PC-3 (cell line): ENCODE measurements at regions of chr1 and their contacts with region 1.

Region 1: GRCh38 chr1:177181631-177182291 is 11.0 kb downstream of the BRINP2 start:
- DNase-seq: peak; percentile 78
- ATAC-seq: peak; percentile 93
- H3K4me3 ChIP-seq: peak overlapping the region; percentile 57
- H3K27ac ChIP-seq: no peak overlapping the region
- H3K4me1 ChIP-seq: peaks cover 11% of the 10 kb centered on the region
- H3K27me3 ChIP-seq: no peaks in the 10 kb centered on the region
- CTCF ChIP-seq: peak; percentile 79

Region 2: DNA sequence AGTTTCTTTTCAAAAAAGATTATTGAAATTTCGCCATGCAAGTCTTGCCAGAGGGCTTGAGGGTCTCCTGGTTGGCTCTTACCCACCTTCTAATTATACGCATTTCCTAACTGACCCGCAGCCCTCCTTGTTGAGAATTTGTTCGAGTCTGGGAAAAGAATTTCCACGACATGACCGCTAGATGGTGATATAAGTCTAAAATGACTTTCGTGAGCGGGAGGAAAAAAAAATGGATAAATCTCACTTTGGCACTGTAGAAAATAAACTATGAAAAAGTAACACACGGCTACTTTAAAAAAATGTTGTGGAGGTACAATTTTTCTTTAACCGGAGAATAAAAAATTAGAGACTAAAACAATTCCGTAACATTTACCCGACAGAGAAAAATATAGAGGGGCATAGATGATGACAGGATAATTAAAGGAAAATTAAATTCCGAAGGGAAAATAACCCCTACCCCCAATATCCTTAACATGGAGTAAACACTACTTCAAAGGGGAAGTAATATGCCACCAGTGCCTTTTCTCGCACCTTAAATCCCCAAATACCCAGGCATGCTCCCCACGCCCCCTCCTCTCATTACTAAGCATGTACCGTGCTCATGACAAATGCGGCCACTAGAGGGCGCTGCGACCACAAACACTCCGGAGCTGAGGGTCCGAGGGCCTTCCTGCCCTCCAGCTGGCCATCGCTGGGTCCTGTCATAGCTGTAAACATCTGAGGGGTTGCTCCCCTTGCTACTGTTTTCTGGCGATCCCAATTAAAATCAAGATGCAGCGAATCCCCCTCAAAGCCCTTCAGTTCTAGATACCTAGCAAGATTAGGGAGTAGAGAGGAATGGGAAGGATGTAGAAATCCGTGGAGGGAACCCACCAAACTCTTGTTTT is 284.2 kb before region 1 on chr1:
- CTCF ChIA-PET with region 1: interaction called, 23 read pairs
- POLR2A ChIA-PET with region 1: no interaction called
- intact Hi-C with region 1: loop called (anchors 1 kb)
- DNase-seq: peak; percentile 72
- ATAC-seq: peak; percentile 80
- H3K4me3 ChIP-seq: peak overlapping the region; percentile 57
- H3K27ac ChIP-seq: no peak overlapping the region
- H3K4me1 ChIP-seq: no peaks in the 10 kb centered on the region
- H3K27me3 ChIP-seq: peaks cover 32% of the 10 kb centered on the region; the same call in 1 of the 2 replicates
- CTCF ChIP-seq: peak; percentile 85

Region 3: DNA sequence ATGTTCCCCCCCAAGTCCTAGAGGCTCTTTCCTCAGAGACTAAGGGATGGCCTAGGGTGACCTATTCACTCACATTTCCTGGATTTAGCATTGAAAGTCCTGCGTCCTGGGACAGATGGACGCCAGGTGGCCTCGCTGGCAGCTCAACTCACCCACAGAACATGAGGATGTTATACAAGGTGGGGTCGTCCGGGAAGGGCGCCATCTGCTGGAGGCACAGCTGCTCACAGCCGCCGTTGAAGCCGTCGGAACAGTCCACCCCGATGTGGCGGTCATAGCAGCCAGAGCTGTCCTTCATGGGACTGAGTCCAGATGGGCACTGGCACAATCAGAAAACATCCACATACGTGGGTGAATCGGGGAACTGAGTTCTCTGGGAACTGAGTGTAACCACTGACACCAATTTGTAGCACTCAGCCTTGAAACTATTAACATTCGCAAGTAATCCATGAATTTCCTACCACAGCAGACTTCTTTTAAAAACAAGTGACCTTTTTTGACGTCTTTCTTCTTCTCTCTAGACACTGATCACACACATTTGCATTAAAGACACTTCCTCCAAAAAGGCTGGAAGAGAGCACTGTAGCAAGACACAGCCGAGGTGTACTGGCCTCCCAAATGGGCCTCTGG is 232.6 kb before region 1 on chr1:
- CTCF ChIA-PET with region 1: no interaction called
- POLR2A ChIA-PET with region 1: no interaction called
- intact Hi-C with region 1: loop called (anchors 2 kb)
- DNase-seq: peak; percentile 54
- ATAC-seq: peak; percentile 59
- H3K4me3 ChIP-seq: no peak overlapping the region
- H3K27ac ChIP-seq: no peak overlapping the region
- H3K4me1 ChIP-seq: no peaks in the 10 kb centered on the region
- H3K27me3 ChIP-seq: no peaks in the 10 kb centered on the region
- CTCF ChIP-seq: peak; percentile 78

Region 4: DNA sequence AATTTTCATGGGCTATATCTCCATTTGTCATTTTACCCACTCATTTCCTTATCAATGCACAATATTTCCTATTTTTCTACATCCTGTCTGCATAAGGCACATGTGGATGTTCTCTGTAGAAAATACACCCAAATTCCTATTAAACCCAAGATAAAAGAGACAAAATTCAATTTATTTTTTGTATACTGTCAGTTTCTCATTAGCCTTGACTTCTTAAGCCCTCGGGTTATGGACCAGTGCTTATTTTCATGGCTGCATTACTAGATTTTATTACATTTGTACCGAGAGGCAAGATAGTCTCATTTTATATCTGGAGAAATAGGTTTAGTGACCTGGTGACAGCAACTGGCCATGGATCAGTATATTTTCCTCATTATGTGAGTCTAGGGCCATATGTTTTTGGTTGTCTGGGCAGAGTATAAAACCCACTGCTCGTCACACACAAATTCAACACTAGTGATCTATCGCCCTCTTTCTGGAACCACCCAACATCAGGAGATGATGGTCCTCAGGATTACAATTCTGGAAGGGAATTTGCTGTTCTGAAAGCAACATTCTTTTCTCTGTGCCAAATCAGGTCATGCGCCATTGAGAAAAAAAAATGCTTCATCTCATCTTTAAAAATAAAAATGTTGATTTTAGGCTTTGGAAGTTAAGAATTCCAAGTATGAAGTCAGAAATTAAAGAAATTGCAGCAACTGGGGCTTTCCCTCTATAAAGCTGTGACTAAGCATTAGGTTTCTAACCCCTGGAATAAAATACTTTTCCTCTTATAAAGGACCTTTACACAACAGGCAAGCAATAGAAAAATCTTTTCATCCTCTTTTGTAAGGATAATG is 98.7 kb before region 1 on chr1:
- CTCF ChIA-PET with region 1: no interaction called
- POLR2A ChIA-PET with region 1: no interaction called
- intact Hi-C with region 1: loop called (anchors 5 kb)
- DNase-seq: peak; percentile 83
- ATAC-seq: peak; percentile 90
- H3K4me3 ChIP-seq: no peak overlapping the region
- H3K27ac ChIP-seq: peak overlapping the region; percentile 84
- H3K4me1 ChIP-seq: peaks cover 29% of the 10 kb centered on the region
- H3K27me3 ChIP-seq: no peaks in the 10 kb centered on the region
- CTCF ChIP-seq: no peak

Region 5: DNA sequence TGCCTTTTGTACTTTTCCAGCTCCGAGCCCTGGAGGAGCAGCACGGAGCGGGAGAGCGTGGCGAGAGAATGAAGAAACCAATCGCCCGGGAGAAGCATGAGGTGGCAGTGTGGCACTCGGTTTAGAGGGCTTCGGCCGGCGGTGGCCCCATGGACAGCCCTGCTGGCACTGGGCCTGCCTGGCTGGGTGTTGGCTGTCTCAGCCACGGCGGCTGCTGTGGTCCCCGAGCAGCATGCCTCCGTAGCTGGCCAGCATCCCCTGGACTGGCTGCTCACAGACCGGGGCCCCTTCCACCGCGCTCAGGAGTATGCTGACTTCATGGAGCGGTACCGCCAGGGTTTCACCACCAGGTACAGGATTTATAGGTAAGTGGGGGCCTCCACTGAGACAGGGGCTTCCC is 48.0 kb after region 1 on chr1:
- CTCF ChIA-PET with region 1: no interaction called
- POLR2A ChIA-PET with region 1: no interaction called
- intact Hi-C with region 1: loop called (anchors 5 kb)
- DNase-seq: no peak
- ATAC-seq: no peak
- H3K4me3 ChIP-seq: no peak overlapping the region
- H3K27ac ChIP-seq: no peak overlapping the region
- H3K4me1 ChIP-seq: peaks cover 10% of the 10 kb centered on the region
- H3K27me3 ChIP-seq: no peaks in the 10 kb centered on the region
- CTCF ChIP-seq: no peak

Region 6: GRCh38 chr1:177355595-177355994 is 173.8 kb after region 1 on chr1:
- CTCF ChIA-PET with region 1: no interaction called
- POLR2A ChIA-PET with region 1: no interaction called
- intact Hi-C with region 1: loop called (anchors 5 kb)
- DNase-seq: peak; percentile 60
- ATAC-seq: peak; percentile 81
- H3K4me3 ChIP-seq: no peak overlapping the region
- H3K27ac ChIP-seq: no peak overlapping the region
- H3K4me1 ChIP-seq: 0 out of 2 replicates have a peak, but pooled peaks cover 3% of the 10 kb centered on the region
- H3K27me3 ChIP-seq: no peaks in the 10 kb centered on the region
- CTCF ChIP-seq: peak; percentile 72

Region 7: DNA sequence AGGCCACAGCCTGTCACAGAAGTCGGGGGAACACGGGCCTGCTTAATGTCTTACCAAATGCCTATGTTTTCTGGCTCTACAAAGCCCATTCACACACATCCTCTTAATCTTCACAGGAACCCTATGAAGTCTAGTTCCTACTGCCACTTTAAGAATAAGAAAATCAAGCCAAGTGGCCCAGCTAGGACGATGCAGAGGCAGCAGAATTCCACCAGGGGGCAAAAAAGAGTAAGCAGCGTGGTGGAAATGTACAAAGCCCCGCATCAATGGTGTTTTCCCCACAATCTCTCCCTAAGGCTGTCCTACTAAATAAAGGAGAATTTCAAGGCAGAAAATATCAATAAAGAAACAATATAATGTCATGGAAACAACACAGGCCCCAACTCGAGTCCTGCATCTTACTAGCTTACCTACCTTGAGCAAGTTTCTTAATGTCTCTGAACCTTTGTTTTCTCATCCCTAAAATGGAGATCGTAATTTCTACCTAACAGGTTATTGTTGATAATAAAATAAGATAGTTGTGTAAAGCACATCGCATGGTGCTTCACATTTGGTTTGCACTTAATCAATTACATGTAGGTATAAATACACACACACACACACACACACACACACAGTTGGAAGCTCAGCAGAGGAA is 766.7 kb after region 1 on chr1:
- CTCF ChIA-PET with region 1: no interaction called
- POLR2A ChIA-PET with region 1: no interaction called
- intact Hi-C with region 1: loop called (anchors 10 kb)
- DNase-seq: peak; percentile 70
- ATAC-seq: peak; percentile 76
- H3K4me3 ChIP-seq: peak overlapping the region; percentile 47; the same call in 1 of the 2 replicates
- H3K27ac ChIP-seq: no peak overlapping the region
- H3K4me1 ChIP-seq: no peaks in the 10 kb centered on the region
- H3K27me3 ChIP-seq: no peaks in the 10 kb centered on the region
- CTCF ChIP-seq: peak; percentile 84